ENCODE measurements at regions of chr5 and their contacts with region 1.

Region 1: GRCh38 chr5:180652346-180652745 is 2.9 kb upstream of the FLT4 start:
- DNase-seq: no peak
- ATAC-seq: no peak
- H3K4me3 Mint-ChIP-seq: no peak overlapping the region
- H3K27ac Mint-ChIP-seq: no peak overlapping the region
- H3K4me1 Mint-ChIP-seq: peaks cover 9% of the 10 kb centered on the region
- H3K27me3 Mint-ChIP-seq: peaks cover 63% of the 10 kb centered on the region

Region 2: DNA sequence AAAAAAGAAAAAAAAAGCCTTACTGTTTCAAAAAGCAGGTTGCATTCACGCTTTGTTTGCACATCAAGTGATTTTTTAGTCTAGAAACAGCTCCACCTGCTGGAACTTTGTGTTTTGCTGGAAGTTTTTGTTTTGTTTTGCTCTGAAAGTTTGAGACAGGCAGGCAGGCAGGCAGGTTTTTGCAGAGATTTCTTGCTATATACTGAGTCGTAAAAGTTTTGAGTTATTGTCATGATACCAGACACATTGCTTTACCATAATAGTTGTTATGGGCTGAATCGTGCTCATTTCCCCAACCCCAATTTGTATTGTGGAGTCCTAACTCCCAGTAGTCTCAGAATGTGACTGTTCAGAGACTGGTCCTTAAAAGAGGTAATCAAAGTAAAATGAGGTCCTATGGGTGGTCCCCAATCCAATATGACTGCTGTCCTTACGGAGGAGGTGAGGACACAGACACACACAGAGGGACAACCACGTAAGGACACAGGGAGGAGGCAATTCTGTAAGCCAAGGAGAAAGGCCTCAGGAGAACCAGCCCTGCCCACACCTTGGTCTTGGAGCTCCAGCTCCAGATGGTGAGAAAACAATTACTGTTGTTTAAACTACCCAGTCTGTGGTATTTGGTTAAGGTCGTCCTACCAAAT is 66.6 kb after region 1 on chr5:
- CTCF ChIA-PET with region 1: interaction called, 12 read pairs
- DNase-seq: peak; percentile 58
- ATAC-seq: peak; percentile 41
- H3K4me3 Mint-ChIP-seq: no peak overlapping the region
- H3K27ac Mint-ChIP-seq: peak overlapping the region; percentile 25
- H3K4me1 Mint-ChIP-seq: peaks cover 39% of the 10 kb centered on the region
- H3K27me3 Mint-ChIP-seq: peaks cover 36% of the 10 kb centered on the region

Measured in activated CD8-positive, alpha-beta memory T cell treated with anti-CD3 and anti-CD28 coated beads, Interleukin-2, amount 10 ng/mL, durations not matched to agents 7 days and 5 days (primary cell).